ENCODE measurements at regions of chr22 and their contacts with region 1.

Region 1: GRCh38 chr22:36365020-36365411 is 22.8 kb downstream of the MYH9 start:
- DNase-seq: peak; percentile 98
- H3K4me3 Mint-ChIP-seq: peak overlapping the region; percentile 53
- H3K27ac Mint-ChIP-seq: peak overlapping the region; percentile 96
- H3K4me1 Mint-ChIP-seq: peaks cover 99% of the 10 kb centered on the region
- H3K27me3 Mint-ChIP-seq: no peaks in the 10 kb centered on the region

Region 2: DNA sequence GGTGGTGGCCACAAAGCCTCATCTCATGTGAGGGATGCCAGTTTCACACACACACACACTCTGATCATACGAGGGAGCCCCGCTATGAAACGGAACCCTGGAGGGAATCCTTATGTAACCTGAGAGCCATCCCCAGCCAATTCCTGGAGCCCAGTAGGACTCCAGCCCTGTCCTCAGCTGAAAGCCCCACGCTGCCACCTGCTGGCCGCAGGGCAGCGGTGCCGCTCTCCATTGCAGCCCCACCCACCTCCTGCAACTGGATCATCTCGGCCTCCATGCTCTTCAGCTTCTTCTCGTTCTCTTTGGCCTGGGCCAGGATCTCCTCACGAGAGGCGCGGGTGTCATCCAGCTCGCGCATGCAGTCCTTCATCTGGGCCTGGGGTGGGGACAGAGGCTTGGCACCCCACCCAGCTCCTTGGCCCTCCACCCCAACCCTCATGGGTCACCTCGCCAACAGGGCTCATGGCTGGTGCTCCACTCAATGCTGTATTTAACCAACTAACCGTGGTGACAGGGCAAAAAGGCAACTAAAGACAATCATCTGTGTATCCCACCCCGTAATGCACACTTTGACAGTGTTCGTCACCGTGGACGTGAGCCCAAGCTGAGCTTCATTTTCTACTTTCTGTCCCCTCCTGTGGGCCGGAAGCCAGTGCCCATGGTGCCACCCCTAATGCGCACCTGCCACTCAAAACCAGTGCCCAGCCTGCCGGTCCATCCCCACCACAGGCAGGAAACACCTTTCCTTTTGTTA is 78.4 kb before region 1 on chr22:
- CTCF ChIA-PET with region 1: no interaction called
- intact Hi-C with region 1: no loop called
- DNase-seq: peak; percentile 74
- H3K4me3 Mint-ChIP-seq: no peak overlapping the region
- H3K27ac Mint-ChIP-seq: peak overlapping the region; percentile 56
- H3K4me1 Mint-ChIP-seq: peaks cover 7% of the 10 kb centered on the region
- H3K27me3 Mint-ChIP-seq: no peaks in the 10 kb centered on the region

Region 3: DNA sequence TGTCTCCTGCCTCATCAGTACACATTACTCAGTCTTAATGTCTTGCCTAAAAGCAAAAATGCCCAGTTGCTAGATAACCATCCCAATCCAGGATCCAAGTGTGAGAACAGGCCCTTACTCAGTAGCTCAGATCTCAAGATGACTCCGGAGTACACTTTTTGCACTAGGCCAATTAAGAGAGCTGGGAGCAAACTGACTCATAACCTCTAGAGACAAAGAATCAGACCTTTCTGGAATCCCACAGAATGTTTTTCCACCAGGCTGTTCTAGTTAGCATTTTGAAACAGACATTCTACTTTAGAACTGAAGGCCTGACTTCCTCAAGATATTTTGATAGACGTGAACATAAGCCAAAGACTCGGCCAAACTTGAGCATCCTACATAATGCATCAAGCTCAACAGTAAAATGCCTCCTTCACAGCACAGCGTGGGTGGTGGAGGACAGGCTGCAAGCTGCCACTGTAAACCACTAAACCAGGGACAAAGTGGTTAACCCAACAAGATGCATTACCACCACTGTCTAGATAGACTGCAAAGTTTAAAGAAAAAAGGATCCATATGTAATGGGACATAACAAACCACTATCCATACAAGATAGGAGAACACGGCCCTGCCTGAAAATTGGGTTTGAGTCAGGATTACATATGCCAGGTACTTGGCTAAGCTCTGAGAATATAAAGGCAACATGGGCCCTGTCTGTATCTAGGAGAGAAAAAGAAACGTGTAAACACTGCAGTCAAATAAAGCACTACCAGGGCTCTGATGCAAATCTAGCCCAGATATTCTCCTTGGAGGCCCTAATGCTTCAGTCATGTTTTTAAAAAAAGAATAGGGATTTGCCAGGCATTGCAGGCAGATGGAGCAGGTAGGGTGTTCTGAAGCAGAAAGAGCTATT is 25.6 kb before region 1 on chr22:
- CTCF ChIA-PET with region 1: interaction called, 21 read pairs
- intact Hi-C with region 1: loop called (anchors 1 kb)
- DNase-seq: peak; percentile 47
- H3K4me3 Mint-ChIP-seq: no peak overlapping the region
- H3K27ac Mint-ChIP-seq: peak overlapping the region; percentile 86
- H3K4me1 Mint-ChIP-seq: peaks cover 95% of the 10 kb centered on the region
- H3K27me3 Mint-ChIP-seq: no peaks in the 10 kb centered on the region

Region 4: DNA sequence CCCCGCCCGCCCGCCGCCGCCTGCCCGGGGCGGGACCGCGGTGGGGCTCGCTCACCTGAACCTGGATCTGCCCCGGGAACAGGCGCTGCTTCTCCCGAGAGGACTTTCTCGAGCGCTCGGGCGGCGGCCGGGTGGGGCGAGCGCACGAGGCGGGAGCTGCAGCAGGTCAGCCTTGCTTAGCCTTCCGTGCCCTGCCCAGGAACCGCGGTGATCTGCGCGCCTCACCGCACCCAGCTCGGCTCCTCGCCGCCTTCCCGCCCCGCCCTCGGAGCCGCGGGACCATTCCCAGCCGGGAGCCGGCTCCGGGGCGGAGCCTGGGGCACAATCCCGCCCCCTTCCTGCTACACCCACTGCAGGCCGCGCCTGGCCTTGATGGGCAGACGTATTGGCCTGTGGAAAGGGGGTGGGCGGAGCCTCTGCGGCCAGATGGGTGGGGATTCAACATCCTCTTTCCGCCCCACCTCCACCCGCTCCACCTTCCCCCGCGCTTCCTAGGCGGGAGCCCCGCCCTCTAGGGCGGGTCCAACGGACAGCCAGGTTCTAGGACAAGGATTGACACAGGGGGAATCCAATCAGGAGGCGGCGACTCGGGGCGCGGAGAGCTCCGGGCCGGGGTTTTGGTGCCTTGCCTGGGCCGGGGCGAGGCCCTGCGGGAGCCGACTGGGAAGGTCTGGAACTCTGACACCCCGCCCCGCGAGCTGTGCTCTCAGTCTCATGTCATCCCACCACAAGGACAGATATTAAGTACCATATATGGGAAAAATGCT is 22.9 kb after region 1 on chr22 and contains the start of gene MYH9:
- CTCF ChIA-PET with region 1: interaction called, 6 read pairs
- intact Hi-C with region 1: loop called (anchors 1 kb)
- DNase-seq: peak; percentile 100
- H3K4me3 Mint-ChIP-seq: peak within 1 kb of the TSS; percentile 83
- H3K27ac Mint-ChIP-seq: peak within 1 kb of the TSS; percentile 96
- H3K4me1 Mint-ChIP-seq: peaks cover 25% of the 10 kb centered on the region
- H3K27me3 Mint-ChIP-seq: no peaks in the 10 kb centered on the region
- total RNA-seq, gene MYH9: 574 to 625 TPM

Region 5: GRCh38 chr22:36435516-36436415 is 70.8 kb after region 1 on chr22:
- CTCF ChIA-PET with region 1: no interaction called
- intact Hi-C with region 1: loop called (anchors 1 kb)
- DNase-seq: peak; percentile 86
- H3K4me3 Mint-ChIP-seq: peak overlapping the region; percentile 49
- H3K27ac Mint-ChIP-seq: peak overlapping the region; percentile 85
- H3K4me1 Mint-ChIP-seq: peaks cover 42% of the 10 kb centered on the region
- H3K27me3 Mint-ChIP-seq: no peaks in the 10 kb centered on the region

Region 6: DNA sequence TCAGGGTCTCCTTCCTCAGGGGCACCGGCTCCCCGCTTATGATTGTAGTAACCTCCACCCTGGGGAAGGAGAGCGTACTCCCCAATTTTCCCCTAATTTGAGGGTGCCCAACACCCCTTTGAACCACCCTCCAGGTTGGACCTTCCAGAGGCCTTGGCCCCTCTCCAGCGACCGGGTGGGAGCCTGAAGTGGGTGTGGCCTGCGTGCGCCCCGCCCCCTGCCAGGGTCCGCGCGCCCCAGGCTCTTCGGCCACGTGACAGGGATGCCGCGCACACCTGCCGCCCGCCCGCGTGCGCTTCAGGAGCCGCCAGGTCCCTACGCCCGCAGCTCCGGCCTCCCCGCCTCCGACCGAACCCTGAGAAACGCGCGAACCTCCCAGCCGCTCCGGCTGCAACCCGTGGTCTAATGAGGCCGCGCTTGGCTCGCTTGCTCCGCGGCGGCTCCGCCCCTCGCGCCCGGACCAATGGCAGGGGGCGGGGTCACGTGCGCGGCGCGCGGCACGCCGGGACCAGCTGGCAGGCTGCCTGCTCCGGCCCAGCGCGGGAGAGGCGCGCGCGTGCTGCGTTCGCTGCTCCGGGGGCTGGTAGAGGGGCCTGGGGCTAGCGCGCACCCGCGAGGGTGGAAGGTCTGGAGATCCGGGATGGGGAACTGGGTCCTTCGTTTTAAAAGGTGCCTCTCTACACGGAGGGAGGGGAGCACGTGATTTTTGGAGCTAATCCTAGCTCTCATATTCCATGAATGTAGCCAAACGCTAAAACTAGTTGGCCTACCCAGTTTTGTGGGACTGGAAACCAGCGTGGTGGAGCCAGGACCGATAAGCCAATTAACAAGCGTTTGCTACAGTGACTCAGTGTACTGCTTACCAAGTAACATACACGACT is 141.9 kb after region 1 on chr22 and contains the start of gene FOXRED2:
- CTCF ChIA-PET with region 1: no interaction called
- intact Hi-C with region 1: no loop called
- DNase-seq: peak; percentile 89
- H3K4me3 Mint-ChIP-seq: peak within 1 kb of the TSS; percentile 72
- H3K27ac Mint-ChIP-seq: peak within 1 kb of the TSS; percentile 50
- H3K4me1 Mint-ChIP-seq: peaks cover 25% of the 10 kb centered on the region
- H3K27me3 Mint-ChIP-seq: no peaks in the 10 kb centered on the region
- total RNA-seq, gene FOXRED2: 10.6 to 11.9 TPM

Region 7: DNA sequence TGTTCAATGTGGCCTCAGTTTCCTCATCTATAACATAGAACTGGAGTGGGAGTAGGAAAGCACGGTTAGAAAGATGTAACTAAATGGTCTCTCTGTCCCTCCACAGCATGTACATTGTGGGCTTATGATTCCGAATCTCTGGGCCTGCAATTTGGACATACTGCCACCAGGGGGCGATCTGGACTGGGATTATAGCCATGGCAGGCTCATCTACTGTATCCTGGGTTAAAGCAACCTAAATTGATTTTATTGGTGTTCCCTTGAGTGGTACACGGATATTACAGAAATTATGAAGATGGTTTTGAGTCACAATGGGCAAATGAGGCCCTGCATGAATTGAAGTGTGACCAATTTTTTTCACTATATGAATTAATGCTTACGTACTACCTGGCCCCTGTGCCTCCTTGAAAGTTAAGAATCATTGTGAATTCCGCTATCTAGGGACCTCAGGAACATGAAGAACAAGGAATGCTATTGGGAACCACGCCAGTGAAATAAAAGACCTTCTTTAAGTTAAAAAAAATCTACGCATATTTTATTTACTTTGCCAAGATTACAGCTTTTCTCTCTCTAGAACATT is 621.3 kb after region 1 on chr22:
- CTCF ChIA-PET with region 1: no interaction called
- intact Hi-C with region 1: no loop called
- DNase-seq: peak; percentile 79
- H3K4me3 Mint-ChIP-seq: no peak overlapping the region
- H3K27ac Mint-ChIP-seq: no peak overlapping the region
- H3K4me1 Mint-ChIP-seq: no peaks in the 10 kb centered on the region
- H3K27me3 Mint-ChIP-seq: peaks cover 18% of the 10 kb centered on the region